ENCODE measurements at regions of chr15 and their contacts with region 1.

Region 1: DNA sequence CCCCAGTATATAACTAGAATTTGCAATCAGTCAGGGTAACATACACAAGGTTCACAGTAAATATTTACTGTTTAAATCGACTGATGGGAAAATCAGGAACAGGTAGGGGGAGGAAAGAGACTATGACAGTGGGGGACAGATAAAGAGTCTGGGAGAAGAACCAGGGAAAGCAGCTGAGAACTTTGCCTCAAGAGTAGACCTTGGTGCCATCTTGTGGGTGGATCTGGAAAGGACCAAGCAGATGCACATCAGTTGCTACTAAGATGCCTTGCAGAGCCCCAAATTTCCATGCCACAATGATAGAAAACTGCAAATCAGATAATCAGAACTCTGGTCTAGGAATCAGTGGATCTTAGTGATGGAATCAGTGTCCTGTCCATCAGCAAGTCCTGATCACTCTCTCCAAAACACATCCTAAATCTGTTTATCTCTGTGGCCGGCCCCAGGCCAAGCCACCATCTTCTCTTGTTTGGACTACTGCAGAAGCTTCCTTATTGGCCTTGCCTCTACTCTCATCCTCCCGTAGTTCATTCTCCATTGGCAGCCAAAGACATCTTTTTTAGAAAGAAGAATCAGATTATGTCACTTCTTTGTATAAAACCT is 62.7 kb downstream of the PDE8A start:
- DNase-seq: peak in 3 of 5 donors; percentile 48 to 72 (median 63)
- ATAC-seq: peak; percentile 58 to 80 (median 76)
- H3K4me3 ChIP-seq: no peak overlapping the region
- H3K27ac ChIP-seq: peak overlapping the region in 2 of 12 donors; percentile 48 to 75
- H3K4me1 ChIP-seq: peaks cover 0 to 49% (median 26%) of the 10 kb centered on the region in 12 donors
- H3K27me3 ChIP-seq: no peaks in the 10 kb centered on the region
- CTCF ChIP-seq: peak; percentile 44 to 79 (median 68)
- POLR2A ChIP-seq: no peak

Region 2: DNA sequence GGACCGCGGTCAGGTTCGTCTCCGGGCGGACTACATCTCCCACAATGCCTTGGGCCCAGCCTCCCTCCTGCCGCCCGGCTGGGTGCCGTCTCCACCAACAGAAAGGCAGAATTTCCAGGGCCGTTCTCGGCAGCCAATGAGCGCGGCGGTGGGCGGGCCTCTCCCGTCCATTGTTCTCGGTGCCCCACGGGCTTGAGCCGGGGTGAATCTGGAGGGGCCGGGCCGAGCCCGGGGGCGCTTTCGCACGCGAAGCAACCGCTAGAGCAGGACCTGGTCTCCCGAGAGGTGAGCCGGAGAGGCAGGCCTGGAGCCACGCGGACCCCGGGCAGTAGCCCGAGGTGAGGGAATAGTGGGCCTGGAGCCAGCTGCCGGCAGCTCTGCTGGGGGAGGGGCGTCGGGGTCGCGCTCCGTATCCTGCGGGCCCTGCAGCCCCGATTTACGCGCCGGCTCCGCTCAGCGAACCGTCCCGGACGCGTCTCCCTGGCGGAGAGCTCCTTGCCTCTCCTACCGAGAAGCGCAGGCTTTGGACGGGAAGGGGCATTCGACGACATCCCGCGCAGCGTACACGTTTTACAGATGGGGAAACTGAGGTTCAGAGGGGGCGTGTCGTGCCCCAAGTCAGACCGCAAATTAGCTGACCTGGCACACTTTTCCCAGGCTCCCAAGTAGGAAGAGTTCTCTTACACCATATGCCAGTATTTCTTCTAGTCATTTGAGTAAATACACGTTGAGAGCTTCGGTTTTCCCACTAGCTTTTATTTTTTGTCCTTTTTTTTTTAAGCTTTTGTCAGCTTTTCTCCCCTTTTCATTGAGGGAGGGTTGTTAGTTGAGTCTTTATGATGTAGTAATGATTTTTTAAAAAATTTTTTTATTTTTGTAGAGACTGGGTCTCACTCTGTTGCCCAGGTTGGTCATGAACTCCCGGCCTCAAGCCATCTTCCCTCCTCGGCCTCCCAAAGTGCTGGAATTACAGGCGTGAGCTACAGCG is 443.2 kb before region 1 on chr15 and contains the start of gene ZSCAN2:
- intact Hi-C with region 1: loop called in 2 of 10 experiments (anchors 10 kb)
- DNase-seq: peak; percentile 95 to 97 (median 96)
- ATAC-seq: peak; percentile 98 to 99 (median 99)
- H3K4me3 ChIP-seq: peak within 1 kb of the TSS; percentile 47 to 97 (median 90)
- H3K27ac ChIP-seq: peak within 1 kb of the TSS in 11 of 12 donors; percentile 45 to 83 (median 72)
- H3K4me1 ChIP-seq: peaks cover 0 to 46% (median 9%) of the 10 kb centered on the region in 12 donors
- H3K27me3 ChIP-seq: no peaks in the 10 kb centered on the region
- CTCF ChIP-seq: no peak
- POLR2A ChIP-seq: peak in 1 of 2 donors; percentile 56
- total RNA-seq, gene ZSCAN2: 4.6 to 10.6 (median 6.3) TPM

Region 3: GRCh38 chr15:84863565-84864443 is 180.5 kb before region 1 on chr15:
- intact Hi-C with region 1: loop called in 1 of 10 experiments (anchors 10 kb)
- DNase-seq: peak in 1 of 5 donors; percentile 47
- ATAC-seq: peak; percentile 24 to 40 (median 34)
- H3K4me3 ChIP-seq: peak overlapping the region in 6 of 12 donors; percentile 0 to 32 (median 17)
- H3K27ac ChIP-seq: peak overlapping the region in 11 of 12 donors; percentile 30 to 81 (median 52)
- H3K4me1 ChIP-seq: peaks cover 0 to 37% (median 20%) of the 10 kb centered on the region in 12 donors
- H3K27me3 ChIP-seq: no peaks in the 10 kb centered on the region
- CTCF ChIP-seq: peak in 10 of 12 donors; percentile 26 to 56 (median 42)
- POLR2A ChIP-seq: no peak

Region 4: GRCh38 chr15:84981054-84981710 is 63.2 kb before region 1 on chr15:
- intact Hi-C with region 1: loop called in 5 of 10 experiments (anchors 2 to 5 kb)
- DNase-seq: peak; percentile 96 to 99 (median 97)
- ATAC-seq: peak; percentile 87 to 93 (median 91)
- H3K4me3 ChIP-seq: peak overlapping the region; percentile 64 to 96 (median 84)
- H3K27ac ChIP-seq: peak overlapping the region; percentile 84 to 98 (median 95)
- H3K4me1 ChIP-seq: peaks cover 0 to 46% (median 28%) of the 10 kb centered on the region in 12 donors
- H3K27me3 ChIP-seq: no peaks in the 10 kb centered on the region
- CTCF ChIP-seq: peak in 10 of 12 donors; percentile 15 to 51 (median 34)
- POLR2A ChIP-seq: peak in 1 of 2 donors; percentile 39

Region 5: DNA sequence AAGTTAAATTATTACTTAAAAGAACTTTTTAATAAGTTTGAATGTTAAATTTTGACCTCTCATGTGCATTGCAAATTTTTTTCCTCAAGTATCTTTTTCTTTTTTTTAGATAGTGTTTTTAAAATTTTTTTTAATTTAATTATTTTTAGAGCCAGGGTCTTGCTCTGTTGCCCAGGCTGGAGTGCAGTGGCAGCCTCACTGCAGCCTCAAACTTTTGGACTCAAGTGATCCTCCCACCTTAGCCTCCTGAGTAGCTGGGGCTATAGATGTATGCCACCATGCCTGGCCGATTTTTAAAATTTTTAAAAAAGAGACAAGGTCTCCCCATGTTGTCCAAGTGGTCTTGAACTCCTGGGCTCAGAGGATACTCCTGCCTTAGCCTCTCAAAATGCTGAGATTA is 48.3 kb before region 1 on chr15:
- intact Hi-C with region 1: no loop called
- DNase-seq: no peak
- ATAC-seq: no peak
- H3K4me3 ChIP-seq: no peak overlapping the region
- H3K27ac ChIP-seq: no peak overlapping the region
- H3K4me1 ChIP-seq: peaks cover 0 to 50% (median 38%) of the 10 kb centered on the region in 12 donors
- H3K27me3 ChIP-seq: no peaks in the 10 kb centered on the region
- CTCF ChIP-seq: no peak
- POLR2A ChIP-seq: no peak

Region 6: GRCh38 chr15:85312486-85312885 is 268.1 kb after region 1 on chr15:
- intact Hi-C with region 1: no loop called
- DNase-seq: no peak
- ATAC-seq: peak in 1 of 4 donors; percentile 15
- H3K4me3 ChIP-seq: no peak overlapping the region
- H3K27ac ChIP-seq: no peak overlapping the region
- H3K4me1 ChIP-seq: peaks cover 0 to 14% (median 0%) of the 10 kb centered on the region in 12 donors
- H3K27me3 ChIP-seq: no peaks in the 10 kb centered on the region
- CTCF ChIP-seq: no peak
- POLR2A ChIP-seq: no peak

Measured in heart left ventricle (tissue), 16 donors.